ENCODE measurements at regions of chr10 and their contacts with region 1.

Region 1: GRCh38 chr10:70146489-70147258 is at the start of gene TYSND1:
- DNase-seq: peak; percentile 90
- H3K4me3 Mint-ChIP-seq: peak within 1 kb of the TSS; percentile 92
- H3K27ac Mint-ChIP-seq: peak within 1 kb of the TSS; percentile 96
- H3K4me1 Mint-ChIP-seq: peaks cover 8% of the 10 kb centered on the region
- H3K27me3 Mint-ChIP-seq: no peaks in the 10 kb centered on the region
- total RNA-seq, gene TYSND1: 12.6 and 12.7 TPM in 2 replicates

Region 2: DNA sequence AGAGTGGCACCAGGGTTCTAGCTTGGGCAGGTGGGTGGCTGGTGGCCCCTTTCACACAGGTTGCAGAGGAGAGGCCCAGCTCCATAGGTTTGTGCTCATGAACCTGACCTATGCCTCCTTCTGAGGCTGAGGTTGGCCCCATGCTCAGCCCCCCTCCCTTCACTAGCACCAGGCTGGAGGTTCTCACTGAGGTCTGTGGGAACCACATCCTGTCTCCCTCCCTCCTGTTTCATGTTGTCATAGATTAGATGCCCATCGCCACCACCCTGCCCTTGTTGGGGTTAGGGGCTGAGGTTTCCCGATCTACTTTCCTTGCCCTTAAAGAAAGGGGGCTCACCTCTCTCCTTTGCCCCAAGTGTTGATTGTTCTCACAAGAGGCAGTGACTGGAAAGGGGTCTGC is 588.1 kb before region 1 on chr10:
- intact Hi-C with region 1: no loop called
- DNase-seq: no peak
- H3K4me3 Mint-ChIP-seq: no peak overlapping the region
- H3K27ac Mint-ChIP-seq: no peak overlapping the region
- H3K4me1 Mint-ChIP-seq: peaks cover 10% of the 10 kb centered on the region
- H3K27me3 Mint-ChIP-seq: peaks cover 7% of the 10 kb centered on the region

Region 3: GRCh38 chr10:70093335-70093944 is 53.2 kb before region 1 on chr10:
- intact Hi-C with region 1: loop called (anchors 2 kb)
- DNase-seq: peak; percentile 11
- H3K4me3 Mint-ChIP-seq: peak overlapping the region; percentile 76
- H3K27ac Mint-ChIP-seq: peak overlapping the region; percentile 44
- H3K4me1 Mint-ChIP-seq: peaks cover 31% of the 10 kb centered on the region
- H3K27me3 Mint-ChIP-seq: no peaks in the 10 kb centered on the region

Region 4: DNA sequence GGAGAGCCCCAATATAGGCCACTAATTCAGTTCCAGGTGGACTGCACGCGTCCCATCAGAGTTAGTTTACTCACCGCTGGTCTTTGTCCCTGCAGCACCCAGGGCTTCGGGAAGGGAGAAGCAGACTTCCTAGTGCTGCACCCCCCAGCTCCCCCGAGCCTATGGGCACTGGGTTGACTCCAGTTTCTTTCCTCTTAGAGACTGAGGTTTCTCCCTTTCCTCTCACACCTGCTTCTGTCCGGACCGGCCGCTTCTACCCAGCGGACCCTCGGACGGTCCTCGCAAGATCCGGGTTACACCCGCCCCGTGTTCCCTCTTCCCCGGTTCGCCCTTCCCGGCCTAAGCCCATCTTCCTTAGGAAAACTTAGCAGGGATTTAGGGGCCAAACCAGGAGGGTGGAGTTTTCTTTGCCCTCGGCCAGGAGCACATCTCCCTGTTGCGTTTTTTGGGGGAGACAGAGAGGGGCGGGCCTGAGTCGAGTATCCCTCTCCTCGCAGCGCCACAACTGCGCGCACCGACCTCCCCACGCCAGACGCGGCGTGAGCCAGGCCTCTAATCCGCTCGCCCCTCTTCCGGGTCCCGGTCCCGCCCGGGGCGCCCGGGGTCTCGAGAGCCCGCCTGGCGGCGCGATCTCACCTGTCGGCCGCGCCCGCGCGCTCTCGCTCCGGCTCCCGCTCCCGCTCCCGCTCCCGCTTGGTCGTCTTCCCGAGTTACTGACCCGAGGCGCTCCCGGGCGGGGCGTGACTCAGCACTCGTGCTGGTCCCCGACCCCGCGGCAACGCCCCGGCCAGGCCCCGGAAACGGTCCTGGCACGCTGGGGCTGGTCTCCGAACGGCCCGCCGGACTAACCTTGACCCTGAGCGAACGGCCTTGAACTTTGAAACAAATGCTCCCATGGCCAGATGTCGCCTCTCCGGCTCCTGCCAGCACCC is 14.3 kb before region 1 on chr10 and contains the start of gene AIFM2:
- intact Hi-C with region 1: loop called (anchors 1 kb)
- DNase-seq: no peak
- H3K4me3 Mint-ChIP-seq: peak within 1 kb of the TSS; percentile 86
- H3K27ac Mint-ChIP-seq: peak within 1 kb of the TSS; percentile 82
- H3K4me1 Mint-ChIP-seq: peaks cover 15% of the 10 kb centered on the region
- H3K27me3 Mint-ChIP-seq: peaks cover 9% of the 10 kb centered on the region
- total RNA-seq, gene AIFM2: 7.1 and 7.3 TPM in 2 replicates

Region 5: DNA sequence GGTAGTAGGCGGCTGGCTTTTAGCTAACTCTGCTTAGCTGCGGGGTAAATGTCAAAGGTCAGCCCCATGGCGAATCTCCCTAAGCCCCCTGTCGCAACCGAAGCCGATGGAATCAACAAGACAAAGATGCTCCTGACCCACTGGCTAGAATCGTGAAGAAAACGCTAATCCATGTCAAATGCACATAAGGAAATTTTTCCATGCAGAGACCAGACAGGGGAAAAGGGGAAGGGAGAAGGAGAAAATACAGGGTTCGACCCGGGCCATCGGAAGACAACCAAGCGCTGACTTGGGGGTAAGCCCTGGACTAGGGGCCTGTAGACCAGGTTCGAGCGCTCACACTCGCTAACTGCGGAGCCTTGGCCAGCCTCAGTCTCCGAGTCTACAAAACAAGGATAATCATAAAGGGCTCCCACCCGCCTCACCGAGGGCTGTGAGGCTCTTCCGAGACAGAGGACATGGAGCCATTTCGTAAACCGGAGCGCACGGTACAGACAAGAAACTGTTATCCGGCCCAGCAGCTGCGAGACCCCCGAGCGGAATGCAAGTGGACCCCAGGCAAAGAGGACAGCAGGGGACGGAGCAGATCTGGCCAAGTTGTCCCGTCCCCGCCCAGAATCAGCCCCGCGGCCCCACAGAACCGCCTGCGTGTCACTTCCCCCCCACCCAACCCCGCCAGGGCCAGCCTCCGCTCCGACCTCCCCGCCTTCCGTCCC is 23.1 kb after region 1 on chr10:
- intact Hi-C with region 1: loop called (anchors 1 kb)
- DNase-seq: no peak
- H3K4me3 Mint-ChIP-seq: peak overlapping the region; percentile 96
- H3K27ac Mint-ChIP-seq: peak overlapping the region; percentile 83
- H3K4me1 Mint-ChIP-seq: peaks cover 65% of the 10 kb centered on the region
- H3K27me3 Mint-ChIP-seq: no peaks in the 10 kb centered on the region

Region 6: GRCh38 chr10:70363971-70364771 is 217.5 kb after region 1 on chr10:
- intact Hi-C with region 1: loop called (anchors 1 kb)
- DNase-seq: peak; percentile 81
- H3K4me3 Mint-ChIP-seq: peak overlapping the region; percentile 39
- H3K27ac Mint-ChIP-seq: no peak overlapping the region
- H3K4me1 Mint-ChIP-seq: peaks cover 14% of the 10 kb centered on the region
- H3K27me3 Mint-ChIP-seq: no peaks in the 10 kb centered on the region

Region 7: GRCh38 chr10:70404036-70404786 is 257.5 kb after region 1 on chr10 and contains the start of gene EIF4EBP2:
- intact Hi-C with region 1: loop called (anchors 1 kb)
- DNase-seq: peak; percentile 99
- H3K4me3 Mint-ChIP-seq: peak within 1 kb of the TSS; percentile 96
- H3K27ac Mint-ChIP-seq: peak within 1 kb of the TSS; percentile 92
- H3K4me1 Mint-ChIP-seq: peaks cover 40% of the 10 kb centered on the region
- H3K27me3 Mint-ChIP-seq: peaks cover 2% of the 10 kb centered on the region
- total RNA-seq, gene EIF4EBP2: 36.6 and 37.7 TPM in 2 replicates

Region 8: GRCh38 chr10:70967596-70968587 is 821.2 kb after region 1 on chr10:
- intact Hi-C with region 1: no loop called
- DNase-seq: no peak
- H3K4me3 Mint-ChIP-seq: no peak overlapping the region
- H3K27ac Mint-ChIP-seq: no peak overlapping the region
- H3K4me1 Mint-ChIP-seq: peaks cover 6% of the 10 kb centered on the region
- H3K27me3 Mint-ChIP-seq: peaks cover 3% of the 10 kb centered on the region

Measured in activated T-helper 1 cell treated with anti-CD3 and anti-CD28 coated beads, Interleukin-12 subunit alpha, Interleukin-12 subunit beta, Interleukin-2, Interleukin-4 antibody, amounts not matched to agents 30 ng/mL and 10 ng/mL and 1 ng/mL, durations not matched to agents 14 hours and 24 hours and 36 hours (primary cell).